ENCODE measurements at regions of chr3 and their contacts with region 1.

Region 1: DNA sequence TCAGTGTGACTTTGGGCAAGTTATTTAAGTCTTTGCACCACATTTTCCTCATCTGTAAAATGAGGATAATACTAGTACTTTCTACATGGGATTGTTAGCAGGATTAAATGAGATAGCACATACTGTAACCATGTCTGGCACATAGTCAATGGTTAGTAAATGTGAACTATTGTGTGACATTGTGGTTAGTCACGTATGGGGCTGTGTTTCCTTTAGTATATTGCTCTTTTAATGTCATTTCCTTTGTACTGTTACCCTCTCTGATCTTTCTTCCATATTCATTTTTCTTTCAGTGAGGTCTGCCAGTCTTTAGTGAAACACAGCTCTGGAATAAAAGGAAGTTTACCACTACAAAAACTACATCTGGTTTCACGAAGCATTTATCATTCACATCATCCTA is 21.4 kb downstream of the OPA1 start:
- DNase-seq: no peak
- ATAC-seq: no peak
- H3K4me3 ChIP-seq: no peak overlapping the region
- H3K27ac ChIP-seq: no peak overlapping the region
- H3K4me1 ChIP-seq: no peaks in the 10 kb centered on the region
- H3K27me3 ChIP-seq: no peaks in the 10 kb centered on the region
- CTCF ChIP-seq: no peak

Region 2: DNA sequence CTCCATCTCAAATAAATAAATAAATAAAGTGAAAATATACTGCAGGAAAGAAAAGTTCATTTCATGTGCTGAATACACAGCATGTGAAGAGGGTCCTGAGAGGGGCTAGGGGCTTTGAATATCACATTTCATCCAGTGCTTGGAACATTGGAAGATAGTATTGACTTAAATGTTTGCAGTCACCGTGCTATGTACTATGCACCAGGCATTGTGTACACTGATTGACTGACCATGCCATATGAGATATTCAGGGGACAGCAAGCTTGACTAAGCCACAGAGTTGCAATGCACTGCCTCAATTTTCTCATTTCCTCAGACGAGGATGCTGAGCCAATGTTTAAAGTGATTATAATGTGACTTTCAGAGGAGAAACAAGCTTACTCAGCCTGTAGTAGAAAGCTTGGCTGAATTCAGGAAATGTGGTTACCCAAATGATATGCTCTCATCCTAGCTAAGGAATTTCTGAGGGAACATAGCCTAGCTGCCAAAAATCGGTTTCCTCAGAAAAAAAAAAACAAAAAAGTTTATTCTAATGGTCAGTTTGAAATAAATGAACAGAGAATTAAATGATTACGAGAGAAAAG is 1445.0 kb before region 1 on chr3:
- CTCF ChIA-PET with region 1: no interaction called
- POLR2A ChIA-PET with region 1: no interaction called
- in situ Hi-C with region 1: no loop called
- intact Hi-C with region 1: no loop called
- DNase-seq: no peak
- ATAC-seq: no peak
- H3K4me3 ChIP-seq: no peak overlapping the region
- H3K27ac ChIP-seq: no peak overlapping the region
- H3K4me1 ChIP-seq: no peaks in the 10 kb centered on the region
- H3K27me3 ChIP-seq: no peaks in the 10 kb centered on the region
- CTCF ChIP-seq: no peak

Region 3: GRCh38 chr3:193522473-193522872 is 92.0 kb before region 1 on chr3:
- CTCF ChIA-PET with region 1: no interaction called
- POLR2A ChIA-PET with region 1: no interaction called
- in situ Hi-C with region 1: no loop called
- intact Hi-C with region 1: no loop called
- DNase-seq: no peak
- ATAC-seq: no peak
- H3K4me3 ChIP-seq: no peak overlapping the region
- H3K27ac ChIP-seq: no peak overlapping the region
- H3K4me1 ChIP-seq: no peaks in the 10 kb centered on the region
- H3K27me3 ChIP-seq: 0 out of 2 replicates have a peak, but pooled peaks cover 2% of the 10 kb centered on the region
- CTCF ChIP-seq: no peak

Region 4: DNA sequence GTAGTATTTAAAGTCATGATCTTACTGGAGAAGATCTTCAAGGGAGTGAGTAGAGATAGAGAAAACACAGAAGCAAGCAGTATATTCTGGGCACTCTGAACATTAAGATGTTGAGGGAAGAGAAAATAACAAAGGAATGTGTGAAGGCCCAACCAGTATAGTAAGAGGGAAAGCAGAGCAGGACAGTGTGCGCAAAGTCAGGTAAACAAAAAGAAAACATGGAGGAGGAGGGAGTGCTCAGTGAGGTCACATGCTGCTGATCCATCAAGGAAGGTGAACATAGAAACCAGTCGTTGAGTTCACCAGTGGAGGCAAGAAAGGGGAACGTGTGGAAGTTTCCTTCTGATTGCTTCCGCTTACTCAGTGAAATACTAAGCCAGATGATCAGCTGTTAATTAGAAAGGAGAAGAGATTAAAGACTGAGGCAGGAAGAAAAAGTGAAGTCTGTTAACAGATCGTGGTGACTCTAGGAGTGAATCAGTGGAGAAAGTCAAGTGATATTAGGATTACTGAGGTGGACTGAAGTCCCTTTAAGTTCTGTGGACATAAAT is 25.8 kb after region 1 on chr3:
- CTCF ChIA-PET with region 1: interaction called, 12 read pairs
- POLR2A ChIA-PET with region 1: no interaction called
- in situ Hi-C with region 1: no loop called
- intact Hi-C with region 1: no loop called
- DNase-seq: no peak
- ATAC-seq: no peak; the same call in 1 of the 2 replicates
- H3K4me3 ChIP-seq: no peak overlapping the region
- H3K27ac ChIP-seq: no peak overlapping the region
- H3K4me1 ChIP-seq: no peaks in the 10 kb centered on the region
- H3K27me3 ChIP-seq: no peaks in the 10 kb centered on the region
- CTCF ChIP-seq: no peak

Region 5: DNA sequence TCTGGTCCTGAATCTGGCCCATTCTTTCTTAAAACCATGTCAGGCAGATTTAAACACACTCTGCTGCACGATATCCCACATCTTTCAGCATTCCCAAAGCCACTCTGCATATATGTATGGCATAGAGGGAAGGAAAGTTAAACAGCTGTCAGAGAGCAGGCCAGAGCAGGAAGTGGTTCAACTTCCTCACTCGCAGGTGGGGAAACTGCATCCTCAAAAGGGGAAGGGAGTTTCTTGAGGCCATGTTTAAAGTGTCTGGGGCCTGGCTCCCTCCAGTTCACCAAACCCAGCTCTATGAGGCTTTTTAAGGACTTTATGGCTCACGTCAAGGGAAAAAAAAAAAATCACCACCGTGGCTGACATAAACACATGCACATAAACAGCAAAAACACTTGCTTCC is 101.7 kb after region 1 on chr3:
- CTCF ChIA-PET with region 1: no interaction called
- POLR2A ChIA-PET with region 1: no interaction called
- in situ Hi-C with region 1: no loop called
- intact Hi-C with region 1: no loop called
- DNase-seq: no peak
- ATAC-seq: no peak
- H3K4me3 ChIP-seq: no peak overlapping the region
- H3K27ac ChIP-seq: no peak overlapping the region
- H3K4me1 ChIP-seq: no peaks in the 10 kb centered on the region
- H3K27me3 ChIP-seq: no peaks in the 10 kb centered on the region
- CTCF ChIP-seq: no peak

Region 6: DNA sequence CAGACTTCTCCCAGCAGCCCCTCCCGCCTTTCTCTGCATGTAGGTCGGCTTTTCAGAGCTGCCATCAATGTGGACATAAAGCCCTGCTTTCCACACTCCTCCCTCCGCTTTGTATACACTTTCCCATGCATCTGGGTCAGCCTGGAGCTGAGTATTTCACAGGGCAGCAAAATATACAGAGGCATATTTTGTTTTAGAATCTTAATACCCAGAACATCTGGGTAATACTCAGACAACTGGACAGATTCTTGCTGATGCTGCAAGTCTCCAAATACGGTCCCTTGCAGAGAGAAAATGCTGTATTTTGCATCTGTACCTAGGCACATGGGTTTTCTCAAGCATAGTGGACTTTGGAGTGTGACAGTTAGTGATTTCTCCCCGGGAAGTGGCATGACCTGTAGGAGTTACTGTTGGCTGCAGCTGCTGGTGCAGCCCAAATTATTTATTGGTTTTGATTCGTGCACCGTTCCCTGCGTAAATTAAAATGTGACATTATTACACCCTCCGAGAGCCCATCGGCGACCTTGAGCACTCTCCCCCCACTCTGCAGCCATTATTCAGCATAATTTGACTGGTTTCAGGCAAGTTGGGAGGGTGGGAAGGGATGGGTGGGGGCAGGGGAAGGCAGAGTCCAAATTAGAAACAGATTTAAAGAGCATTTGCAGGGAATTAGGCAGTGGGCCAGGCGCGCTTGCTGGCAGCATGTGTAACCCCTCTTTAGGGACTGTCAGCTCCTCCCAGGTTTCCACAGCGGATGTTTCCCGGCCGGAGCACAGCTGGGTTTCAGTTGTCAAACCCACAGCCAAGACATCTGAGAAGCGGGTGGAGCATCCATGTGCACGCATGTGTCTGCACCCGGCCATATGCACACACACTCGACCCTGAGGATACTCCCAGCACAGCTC is 635.9 kb after region 1 on chr3:
- CTCF ChIA-PET with region 1: no interaction called
- POLR2A ChIA-PET with region 1: interaction called, 10 read pairs
- in situ Hi-C with region 1: no loop called
- intact Hi-C with region 1: no loop called
- DNase-seq: no peak
- ATAC-seq: no peak
- H3K4me3 ChIP-seq: no peak overlapping the region
- H3K27ac ChIP-seq: no peak overlapping the region
- H3K4me1 ChIP-seq: 0 out of 2 replicates have a peak, but pooled peaks cover 5% of the 10 kb centered on the region
- H3K27me3 ChIP-seq: no peaks in the 10 kb centered on the region
- CTCF ChIP-seq: no peak

Measured in Panc1 (cell line).